ENCODE measurements at regions of chr5 and their contacts with region 1.

Region 1: GRCh38 chr5:59380350-59380951 is 513.1 kb downstream of the PDE4D start:
- DNase-seq: peak; percentile 48
- ATAC-seq: peak; percentile 84
- H3K4me3 ChIP-seq: no peak overlapping the region
- H3K27ac ChIP-seq: no peak overlapping the region
- H3K4me1 ChIP-seq: no peaks in the 10 kb centered on the region
- H3K27me3 ChIP-seq: no peaks in the 10 kb centered on the region; the same call in 1 of the 2 replicates
- CTCF ChIP-seq: peak; percentile 48; the same call in 1 of the 2 replicates

Region 2: DNA sequence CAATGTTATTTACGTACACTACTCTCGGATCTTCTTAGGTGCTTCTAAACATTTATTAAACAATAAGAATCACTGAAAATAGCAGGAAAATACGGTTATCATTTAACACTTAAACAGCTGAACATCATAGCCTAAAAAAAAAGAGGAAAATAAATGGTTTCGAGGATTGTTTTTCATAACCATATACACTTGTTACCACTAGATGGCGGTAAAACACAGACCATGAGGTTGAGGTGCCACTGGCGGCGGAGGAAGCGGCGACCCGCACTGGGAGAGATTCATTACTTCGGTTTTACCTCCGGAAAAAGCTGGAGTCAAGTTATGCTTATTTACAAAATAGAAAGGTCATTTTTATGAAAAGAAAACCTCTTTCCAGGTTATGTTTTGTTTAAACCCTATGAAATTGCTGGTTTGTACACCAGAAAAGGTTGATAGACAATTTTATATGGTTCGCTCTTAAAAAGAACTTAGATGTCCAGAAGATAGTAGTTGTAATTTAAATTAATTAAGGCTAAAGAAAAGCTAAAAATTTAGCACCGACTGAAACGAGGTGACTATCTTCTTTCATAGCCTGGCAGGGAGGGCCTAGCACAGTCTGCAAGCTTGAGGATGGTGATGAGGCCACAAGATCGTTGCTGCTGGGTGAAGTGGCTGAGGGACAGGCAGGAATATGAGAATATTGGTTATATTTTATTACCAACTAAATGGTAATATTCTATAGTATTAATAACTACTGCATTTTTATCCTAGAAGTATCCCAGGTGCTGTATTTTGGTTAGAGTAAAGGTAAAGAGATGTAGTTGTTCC is 191.8 kb before region 1 on chr5:
- CTCF ChIA-PET with region 1: interaction called, 13 read pairs
- POLR2A ChIA-PET with region 1: no interaction called
- in situ Hi-C with region 1: no loop called
- intact Hi-C with region 1: loop called (anchors 1 kb)
- DNase-seq: no peak
- ATAC-seq: peak; percentile 87
- H3K4me3 ChIP-seq: no peak overlapping the region
- H3K27ac ChIP-seq: no peak overlapping the region
- H3K4me1 ChIP-seq: no peaks in the 10 kb centered on the region; the same call in 1 of the 2 replicates
- H3K27me3 ChIP-seq: peaks cover 4% of the 10 kb centered on the region; the same call in 1 of the 2 replicates
- CTCF ChIP-seq: peak; percentile 79

Region 3: DNA sequence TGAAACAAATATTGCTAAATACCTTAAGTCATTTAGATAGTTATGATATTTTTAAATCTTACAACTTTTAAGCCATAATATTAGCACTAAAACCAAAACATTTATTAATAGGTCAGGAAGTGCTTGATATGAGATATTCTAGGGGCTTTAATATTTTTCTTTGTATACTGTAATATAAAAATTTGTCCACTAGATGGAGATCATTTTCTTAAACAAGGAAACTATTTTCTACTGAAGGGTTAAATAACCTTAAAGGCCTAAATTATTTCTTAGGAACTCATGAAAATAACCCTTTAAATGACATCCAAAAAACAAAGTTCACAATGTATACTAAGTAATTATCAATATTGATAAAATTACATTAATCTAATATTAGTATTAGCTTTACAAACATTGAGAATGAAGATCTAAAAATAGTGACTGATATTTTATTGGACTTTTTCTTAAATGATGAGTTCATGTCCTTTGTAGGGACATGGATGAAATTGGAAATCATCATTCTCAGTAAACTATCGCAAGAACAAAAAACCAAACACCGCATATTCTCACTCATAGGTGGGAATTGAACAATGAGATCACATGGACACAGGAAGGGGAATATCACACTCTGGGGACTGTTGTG is 161.9 kb before region 1 on chr5:
- CTCF ChIA-PET with region 1: interaction called, 3 read pairs
- POLR2A ChIA-PET with region 1: no interaction called
- in situ Hi-C with region 1: no loop called
- intact Hi-C with region 1: loop called (anchors 2 kb)
- DNase-seq: no peak
- ATAC-seq: no peak
- H3K4me3 ChIP-seq: no peak overlapping the region
- H3K27ac ChIP-seq: no peak overlapping the region
- H3K4me1 ChIP-seq: no peaks in the 10 kb centered on the region
- H3K27me3 ChIP-seq: no peaks in the 10 kb centered on the region
- CTCF ChIP-seq: no peak

Region 4: DNA sequence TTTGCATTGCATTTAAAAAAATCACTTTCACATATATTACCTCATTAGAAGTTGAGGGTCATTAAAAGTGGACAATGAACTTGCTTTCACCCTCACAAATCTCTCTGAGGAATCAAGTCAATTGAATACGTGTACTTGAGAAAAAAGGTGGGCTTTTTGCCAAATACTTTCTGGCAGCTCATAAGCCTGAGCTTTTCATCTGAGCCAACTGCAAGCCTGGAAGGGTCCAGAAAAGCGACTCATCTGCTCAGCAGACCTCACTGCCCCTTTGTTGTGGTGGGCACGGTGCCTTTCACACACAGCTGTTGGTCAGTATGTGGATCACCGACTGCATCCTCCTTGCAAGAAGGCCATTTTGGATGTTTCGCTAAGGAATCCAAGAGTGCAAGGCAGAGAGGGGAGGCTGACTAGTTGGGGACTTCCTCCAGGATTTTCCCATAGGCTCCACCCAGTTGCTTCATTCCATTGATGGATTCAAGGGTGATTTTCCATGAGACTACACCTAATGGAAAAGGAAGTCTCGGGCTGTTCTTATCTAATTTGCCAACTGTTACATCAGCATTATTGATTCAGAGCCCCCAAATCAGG is 51.6 kb before region 1 on chr5:
- CTCF ChIA-PET with region 1: no interaction called
- POLR2A ChIA-PET with region 1: interaction called, 13 read pairs
- in situ Hi-C with region 1: no loop called
- intact Hi-C with region 1: no loop called
- DNase-seq: no peak
- ATAC-seq: no peak
- H3K4me3 ChIP-seq: no peak overlapping the region
- H3K27ac ChIP-seq: no peak overlapping the region
- H3K4me1 ChIP-seq: no peaks in the 10 kb centered on the region
- H3K27me3 ChIP-seq: no peaks in the 10 kb centered on the region
- CTCF ChIP-seq: no peak

Region 5: DNA sequence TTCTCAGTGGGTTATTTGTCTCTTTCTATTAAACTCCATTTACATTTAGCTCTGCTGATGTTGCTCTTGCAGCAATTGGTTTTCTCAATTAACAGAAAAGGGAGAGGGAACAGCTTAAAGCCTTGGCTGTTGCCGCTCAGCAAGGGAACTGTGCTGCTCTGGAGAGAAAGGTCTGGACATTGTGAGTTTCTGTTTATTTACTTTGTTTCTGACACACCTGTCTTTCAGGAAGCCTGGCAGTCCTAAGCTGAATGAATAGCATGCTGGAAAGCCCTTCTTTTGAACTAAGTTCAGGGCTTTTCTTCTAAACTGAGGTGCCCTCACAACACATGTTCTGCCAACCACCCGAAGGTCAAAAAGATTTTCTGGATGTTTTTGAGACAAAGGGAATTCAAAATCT is 21.2 kb after region 1 on chr5:
- CTCF ChIA-PET with region 1: no interaction called
- POLR2A ChIA-PET with region 1: no interaction called
- in situ Hi-C with region 1: no loop called
- intact Hi-C with region 1: no loop called
- DNase-seq: no peak
- ATAC-seq: no peak
- H3K4me3 ChIP-seq: no peak overlapping the region
- H3K27ac ChIP-seq: no peak overlapping the region
- H3K4me1 ChIP-seq: no peaks in the 10 kb centered on the region
- H3K27me3 ChIP-seq: no peaks in the 10 kb centered on the region
- CTCF ChIP-seq: no peak

Region 6: GRCh38 chr5:59648949-59649921 is 268.8 kb after region 1 on chr5:
- CTCF ChIA-PET with region 1: no interaction called
- POLR2A ChIA-PET with region 1: no interaction called
- in situ Hi-C with region 1: no loop called
- intact Hi-C with region 1: no loop called
- DNase-seq: no peak
- ATAC-seq: no peak
- H3K4me3 ChIP-seq: no peak overlapping the region
- H3K27ac ChIP-seq: no peak overlapping the region
- H3K4me1 ChIP-seq: no peaks in the 10 kb centered on the region
- H3K27me3 ChIP-seq: no peaks in the 10 kb centered on the region
- CTCF ChIP-seq: no peak

Region 7: GRCh38 chr5:59698207-59699178 is 318.0 kb after region 1 on chr5:
- CTCF ChIA-PET with region 1: interaction called, 12 read pairs
- POLR2A ChIA-PET with region 1: no interaction called
- in situ Hi-C with region 1: no loop called
- intact Hi-C with region 1: no loop called
- DNase-seq: no peak
- ATAC-seq: no peak
- H3K4me3 ChIP-seq: no peak overlapping the region
- H3K27ac ChIP-seq: no peak overlapping the region
- H3K4me1 ChIP-seq: no peaks in the 10 kb centered on the region
- H3K27me3 ChIP-seq: no peaks in the 10 kb centered on the region
- CTCF ChIP-seq: no peak

Measured in Panc1 (cell line).